Endothelial cell of umbilical vein (primary cell): ENCODE measurements at regions of chr3 and their contacts with region 1.

Region 1: DNA sequence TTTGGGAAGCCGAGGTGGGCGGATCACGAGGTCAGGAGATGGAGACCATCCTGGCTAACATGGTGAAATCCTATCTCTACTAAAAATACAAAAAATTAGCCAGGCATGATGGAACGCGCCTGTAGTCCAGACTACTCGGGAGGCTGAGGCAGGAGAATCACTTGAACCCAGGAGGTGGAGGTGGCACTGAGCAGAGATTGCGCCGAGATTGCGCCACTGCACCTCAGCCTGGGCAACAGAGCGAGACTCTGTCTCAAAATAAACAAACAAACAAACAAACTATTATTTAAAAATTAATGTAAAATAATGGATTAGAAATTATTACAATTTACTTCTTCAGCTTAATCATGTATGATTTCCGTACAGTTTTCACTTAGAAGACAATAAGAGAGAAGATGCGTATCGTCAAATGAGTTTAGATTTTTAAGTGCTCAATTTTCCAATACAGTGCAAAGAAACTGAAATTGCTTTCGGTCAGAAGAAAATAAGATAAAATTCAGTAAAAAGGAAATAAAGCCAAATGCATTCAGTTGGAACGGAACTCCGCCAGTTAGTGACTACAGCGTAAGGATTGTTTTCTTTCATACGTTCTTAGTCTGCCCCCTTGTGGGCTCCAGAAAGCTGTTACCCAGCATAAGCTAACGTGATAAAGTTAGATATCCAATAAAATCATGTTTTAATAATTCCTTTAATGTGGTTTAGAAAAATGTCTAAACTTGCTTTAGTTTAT is 24.8 kb downstream of the AADAC start:
- DNase-seq: peak; percentile 74
- H3K4me3 ChIP-seq: no peak overlapping the region
- H3K27ac ChIP-seq: no peak overlapping the region
- H3K4me1 ChIP-seq: peaks cover 21% of the 10 kb centered on the region
- H3K27me3 ChIP-seq: no peaks in the 10 kb centered on the region
- CTCF ChIP-seq: peak; percentile 62 to 65
- POLR2A ChIP-seq: no peak

Region 2: GRCh38 chr3:151168269-151169094 is 670.3 kb before region 1 on chr3:
- CTCF ChIA-PET with region 1: interaction called, 4 read pairs
- POLR2A ChIA-PET with region 1: no interaction called
- dilution Hi-C with region 1: no loop called
- intact Hi-C with region 1: loop called (anchors 5 kb)
- DNase-seq: peak; percentile 38
- H3K4me3 ChIP-seq: no peak overlapping the region
- H3K27ac ChIP-seq: no peak overlapping the region
- H3K4me1 ChIP-seq: no peaks in the 10 kb centered on the region
- H3K27me3 ChIP-seq: no peaks in the 10 kb centered on the region
- CTCF ChIP-seq: peak; percentile 68 to 76
- POLR2A ChIP-seq: no peak

Region 3: GRCh38 chr3:151379083-151379734 is 459.5 kb before region 1 on chr3:
- CTCF ChIA-PET with region 1: interaction called, 9 read pairs
- POLR2A ChIA-PET with region 1: no interaction called
- dilution Hi-C with region 1: no loop called
- intact Hi-C with region 1: loop called (anchors 1 kb)
- DNase-seq: peak; percentile 10
- H3K4me3 ChIP-seq: no peak overlapping the region
- H3K27ac ChIP-seq: no peak overlapping the region
- H3K4me1 ChIP-seq: no peaks in the 10 kb centered on the region
- H3K27me3 ChIP-seq: no peaks in the 10 kb centered on the region
- CTCF ChIP-seq: peak; percentile 48 to 67
- POLR2A ChIP-seq: no peak

Region 4: DNA sequence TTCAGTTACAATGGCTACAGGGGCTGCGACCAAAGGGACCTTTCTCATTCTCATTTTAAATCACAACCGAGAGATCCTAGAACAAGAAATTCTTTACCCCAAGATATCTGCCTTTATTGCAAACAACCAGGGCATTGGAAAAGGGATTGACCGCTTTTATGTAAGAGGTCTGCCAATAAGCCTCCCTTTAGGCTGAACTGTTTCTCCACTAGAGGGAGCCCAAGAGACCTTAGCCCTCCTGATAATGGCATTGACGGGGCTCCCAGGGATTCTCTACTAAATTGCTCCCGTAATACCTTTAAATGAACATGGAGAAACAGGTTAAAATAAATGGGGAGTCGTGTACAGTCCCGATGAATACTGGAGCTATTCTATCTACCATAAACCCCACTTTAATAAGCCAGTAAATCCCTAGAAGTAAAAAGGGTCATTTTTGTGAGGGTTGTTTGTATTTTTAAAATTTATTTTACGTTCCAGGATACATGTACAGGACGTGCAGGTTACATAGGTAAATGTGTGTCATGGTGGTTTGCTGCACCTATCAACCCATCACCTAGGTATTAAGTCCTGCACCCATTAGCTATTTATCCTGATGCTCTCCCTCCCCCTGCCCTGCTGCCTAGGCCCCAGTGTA is 370.3 kb before region 1 on chr3:
- CTCF ChIA-PET with region 1: interaction called, 171 read pairs
- POLR2A ChIA-PET with region 1: no interaction called
- dilution Hi-C with region 1: no loop called
- intact Hi-C with region 1: loop called (anchors 1 kb)
- DNase-seq: peak; percentile 62
- H3K4me3 ChIP-seq: no peak overlapping the region
- H3K27ac ChIP-seq: no peak overlapping the region
- H3K4me1 ChIP-seq: no peaks in the 10 kb centered on the region
- H3K27me3 ChIP-seq: peaks cover 0 to 2% of the 10 kb centered on the region in 2 experiments
- CTCF ChIP-seq: peak; percentile 83 to 86
- POLR2A ChIP-seq: no peak

Region 5: GRCh38 chr3:151909681-151910405 is 71.1 kb after region 1 on chr3:
- CTCF ChIA-PET with region 1: interaction called, 3 read pairs
- POLR2A ChIA-PET with region 1: no interaction called
- dilution Hi-C with region 1: no loop called
- intact Hi-C with region 1: loop called (anchors 2 kb)
- DNase-seq: peak; percentile 91
- H3K4me3 ChIP-seq: no peak overlapping the region
- H3K27ac ChIP-seq: peak overlapping the region; percentile 71
- H3K4me1 ChIP-seq: peaks cover 21% of the 10 kb centered on the region
- H3K27me3 ChIP-seq: no peaks in the 10 kb centered on the region
- CTCF ChIP-seq: no peak
- POLR2A ChIP-seq: no peak

Region 6: GRCh38 chr3:152574461-152575079 is 735.8 kb after region 1 on chr3:
- CTCF ChIA-PET with region 1: interaction called, 6 read pairs
- POLR2A ChIA-PET with region 1: no interaction called
- dilution Hi-C with region 1: no loop called
- intact Hi-C with region 1: loop called (anchors 10 kb)
- DNase-seq: peak; percentile 78
- H3K4me3 ChIP-seq: no peak overlapping the region
- H3K27ac ChIP-seq: no peak overlapping the region
- H3K4me1 ChIP-seq: no peaks in the 10 kb centered on the region
- H3K27me3 ChIP-seq: no peaks in the 10 kb centered on the region
- CTCF ChIP-seq: peak; percentile 41 to 45
- POLR2A ChIP-seq: no peak